PC-9 (cell line): ENCODE measurements at regions of chr1 and their contacts with region 1.

Region 1: GRCh38 chr1:108746372-108747205 is at the start of gene STXBP3:
- DNase-seq: peak; percentile 92 to 98
- H3K4me3 ChIP-seq: peak within 1 kb of the TSS; percentile 77
- H3K27ac ChIP-seq: peak within 1 kb of the TSS; percentile 83
- H3K4me1 ChIP-seq: peaks cover 13% of the 10 kb centered on the region
- H3K27me3 ChIP-seq: no peaks in the 10 kb centered on the region
- CTCF ChIP-seq: peak; percentile 98
- total RNA-seq, gene STXBP3: 31.8 and 37.0 TPM in 2 replicates

Region 2: DNA sequence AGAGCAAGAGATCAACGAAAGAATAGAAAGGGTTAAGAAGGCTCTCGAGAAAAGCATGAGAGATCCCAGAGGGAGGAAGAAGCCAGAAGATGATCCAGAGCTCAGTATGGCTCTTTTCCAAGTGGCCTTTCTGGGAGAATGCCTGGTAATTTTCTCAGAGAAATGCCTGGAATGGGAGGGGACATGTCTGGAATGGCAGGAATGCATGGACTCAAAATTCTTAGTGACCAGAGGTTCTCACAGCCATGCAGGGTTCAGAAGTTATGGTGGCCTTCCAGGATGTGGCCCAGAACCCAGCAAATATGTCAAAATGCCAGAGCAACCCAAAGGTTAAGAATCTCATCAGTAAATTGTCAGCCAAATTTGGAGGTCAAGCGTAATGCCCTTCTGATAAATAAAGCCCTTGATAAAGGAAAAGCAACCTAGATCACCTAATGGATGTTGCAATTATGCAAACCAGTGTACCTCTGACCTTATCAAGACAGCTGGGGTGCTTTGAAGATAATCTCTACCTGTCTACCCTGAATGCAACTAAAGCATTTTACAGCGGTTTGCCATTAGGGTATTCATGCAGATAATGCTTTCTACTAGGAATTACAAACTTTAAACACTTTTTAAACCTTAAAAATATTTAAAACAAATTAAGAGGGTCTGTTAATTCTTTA is 243.4 kb before region 1 on chr1:
- CTCF ChIA-PET with region 1: no interaction called
- POLR2A ChIA-PET with region 1: no interaction called
- intact Hi-C with region 1: loop called (anchors 2 kb)
- DNase-seq: peak; percentile 79 to 96
- H3K4me3 ChIP-seq: no peak overlapping the region
- H3K27ac ChIP-seq: peak overlapping the region; percentile 76
- H3K4me1 ChIP-seq: peaks cover 34% of the 10 kb centered on the region
- H3K27me3 ChIP-seq: no peaks in the 10 kb centered on the region
- CTCF ChIP-seq: no peak

Region 3: GRCh38 chr1:108661030-108661620 is 85.5 kb before region 1 on chr1 and contains the start of gene HENMT1:
- CTCF ChIA-PET with region 1: no interaction called
- POLR2A ChIA-PET with region 1: no interaction called
- intact Hi-C with region 1: loop called (anchors 2 kb)
- DNase-seq: peak; percentile 58 to 59
- H3K4me3 ChIP-seq: peak within 1 kb of the TSS; percentile 83
- H3K27ac ChIP-seq: peak within 1 kb of the TSS; percentile 86
- H3K4me1 ChIP-seq: peaks cover 13% of the 10 kb centered on the region
- H3K27me3 ChIP-seq: no peaks in the 10 kb centered on the region
- CTCF ChIP-seq: no peak
- total RNA-seq, gene HENMT1: 17.9 and 21.5 TPM in 2 replicates

Region 4: DNA sequence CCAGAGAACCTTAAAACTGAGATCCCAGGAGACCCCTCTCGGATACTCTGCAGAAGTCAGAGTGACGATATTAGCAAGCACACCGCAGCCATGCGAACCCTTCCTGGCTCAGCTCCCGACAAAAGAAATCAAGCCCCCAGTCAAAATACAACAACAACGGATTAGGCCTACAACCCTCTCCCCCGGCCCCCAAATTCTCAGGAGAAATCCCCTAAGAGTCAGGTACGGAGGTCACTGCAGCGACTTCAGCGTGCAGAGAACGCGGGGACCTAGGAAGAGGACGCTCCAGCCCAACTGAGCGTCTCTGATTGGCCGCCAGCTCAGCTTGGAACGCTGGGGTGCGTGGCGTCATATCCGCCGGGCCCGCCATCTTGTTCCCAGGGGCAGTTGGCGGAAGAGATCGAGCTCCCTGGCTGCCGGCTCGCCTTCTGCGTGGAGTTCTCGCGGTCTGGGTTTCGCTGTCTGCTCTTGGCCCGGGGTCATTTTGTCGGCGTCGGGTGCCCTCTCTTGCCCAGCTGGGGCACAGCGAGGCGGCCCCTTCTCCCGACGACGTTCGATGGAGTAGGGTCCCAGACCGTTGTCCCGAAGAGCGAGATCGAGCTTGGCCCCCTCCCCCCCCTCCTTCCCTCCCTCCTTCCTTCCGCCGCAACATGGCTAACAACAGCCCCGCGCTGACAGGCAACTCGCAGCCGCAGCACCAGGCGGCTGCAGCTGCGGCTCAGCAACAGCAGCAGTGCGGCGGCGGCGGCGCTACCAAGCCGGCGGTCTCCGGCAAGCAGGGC is 54.5 kb before region 1 on chr1 and contains the start of gene PRPF38B:
- CTCF ChIA-PET with region 1: no interaction called
- POLR2A ChIA-PET with region 1: no interaction called
- intact Hi-C with region 1: loop called (anchors 1 kb)
- DNase-seq: peak; percentile 89 to 90
- H3K4me3 ChIP-seq: peak within 1 kb of the TSS; percentile 93
- H3K27ac ChIP-seq: peak within 1 kb of the TSS; percentile 79
- H3K4me1 ChIP-seq: peaks cover 25% of the 10 kb centered on the region
- H3K27me3 ChIP-seq: no peaks in the 10 kb centered on the region
- CTCF ChIP-seq: no peak
- total RNA-seq, gene PRPF38B: 38.0 and 48.9 TPM in 2 replicates

Region 5: GRCh38 chr1:108719656-108720435 is 26.7 kb before region 1 on chr1:
- CTCF ChIA-PET with region 1: no interaction called
- POLR2A ChIA-PET with region 1: no interaction called
- intact Hi-C with region 1: loop called (anchors 2 kb)
- DNase-seq: peak; percentile 55 to 85
- H3K4me3 ChIP-seq: peak overlapping the region; percentile 15; the same call in 1 of the 2 replicates
- H3K27ac ChIP-seq: peak overlapping the region; percentile 88
- H3K4me1 ChIP-seq: peaks cover 30% of the 10 kb centered on the region
- H3K27me3 ChIP-seq: no peaks in the 10 kb centered on the region
- CTCF ChIP-seq: no peak

Region 6: GRCh38 chr1:109041621-109042468 is 295.3 kb after region 1 on chr1 and contains the start of gene WDR47:
- CTCF ChIA-PET with region 1: no interaction called
- POLR2A ChIA-PET with region 1: no interaction called
- intact Hi-C with region 1: loop called (anchors 2 kb)
- DNase-seq: peak; percentile 93 to 94
- H3K4me3 ChIP-seq: peak within 1 kb of the TSS; percentile 76
- H3K27ac ChIP-seq: no peak within 1 kb of the TSS
- H3K4me1 ChIP-seq: peaks cover 16% of the 10 kb centered on the region
- H3K27me3 ChIP-seq: no peaks in the 10 kb centered on the region
- CTCF ChIP-seq: no peak
- total RNA-seq, gene WDR47: 6.4 and 8.3 TPM in 2 replicates